Tibial artery (tissue), 4 donors: ENCODE measurements at regions of chr3 and their contacts with region 1.

Region 1: DNA sequence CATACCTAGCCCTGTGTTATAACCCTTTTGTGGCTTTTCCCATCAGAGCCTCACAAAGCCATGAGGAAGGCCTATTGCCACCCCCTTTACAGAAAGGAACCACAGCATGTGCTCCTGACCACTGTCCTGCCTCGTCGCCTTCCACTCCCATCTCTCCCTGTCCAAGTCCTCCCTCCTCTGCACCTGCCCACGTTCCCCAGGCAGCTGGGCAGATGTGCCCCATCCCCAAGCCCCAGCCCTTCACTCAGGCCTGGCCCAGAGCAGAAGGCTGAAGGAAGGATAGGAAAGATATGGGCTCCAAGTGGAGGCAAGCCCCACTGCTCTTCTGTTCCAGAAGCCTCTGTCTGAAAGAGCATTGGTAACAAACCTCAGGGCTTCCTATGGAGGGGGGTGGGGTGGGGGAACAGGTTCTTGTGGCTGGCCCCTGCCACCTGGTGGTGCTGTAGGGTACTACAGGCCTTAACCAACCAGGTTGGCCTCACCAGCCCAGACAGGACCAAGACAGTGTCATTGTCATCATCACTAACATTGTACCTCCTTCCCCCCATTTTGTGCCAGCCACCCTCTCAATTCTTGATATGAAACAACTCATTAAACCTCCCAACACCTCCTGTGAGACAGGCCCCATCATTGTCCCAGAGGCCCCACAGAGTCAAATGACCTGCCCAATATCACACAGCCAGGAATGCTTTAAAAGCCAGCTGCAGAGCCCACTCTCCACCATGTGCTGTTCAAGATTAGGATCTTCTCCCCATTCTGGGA is 10.0 kb downstream of the POC1A start:
- DNase-seq: peak; percentile 90 to 91
- H3K4me3 ChIP-seq: no peak overlapping the region
- H3K27ac ChIP-seq: no peak overlapping the region
- H3K4me1 ChIP-seq: peaks cover 0 to 9% (median 2%) of the 10 kb centered on the region in 4 donors
- H3K27me3 ChIP-seq: no peaks in the 10 kb centered on the region
- CTCF ChIP-seq: peak; percentile 97 to 98

Region 2: GRCh38 chr3:51941798-51942602 is 202.2 kb before region 1 on chr3 and contains the starts of genes PARP3 and RRP9:
- intact Hi-C with region 1: loop called (anchors 5 kb)
- DNase-seq: peak; percentile 100
- H3K4me3 ChIP-seq: peak within 1 kb of the TSS; percentile 72 to 78
- H3K27ac ChIP-seq: peak within 1 kb of the TSS; percentile 88 to 97
- H3K4me1 ChIP-seq: peaks cover 0 to 33% (median 29%) of the 10 kb centered on the region in 4 donors
- H3K27me3 ChIP-seq: no peaks in the 10 kb centered on the region
- CTCF ChIP-seq: peak; percentile 99 to 100

Region 3: GRCh38 chr3:52001443-52001974 is 142.7 kb before region 1 on chr3:
- intact Hi-C with region 1: loop called (anchors 1 kb)
- DNase-seq: peak; percentile 60 to 81
- H3K4me3 ChIP-seq: no peak overlapping the region
- H3K27ac ChIP-seq: no peak overlapping the region
- H3K4me1 ChIP-seq: peaks cover 0 to 27% (median 21%) of the 10 kb centered on the region in 4 donors
- H3K27me3 ChIP-seq: peaks cover 0 to 29% of the 10 kb centered on the region in 2 donors
- CTCF ChIP-seq: peak; percentile 84 to 98